Uterus (tissue), 4 donors: ENCODE measurements at regions of chr10 and their contacts with region 1.

Region 1: DNA sequence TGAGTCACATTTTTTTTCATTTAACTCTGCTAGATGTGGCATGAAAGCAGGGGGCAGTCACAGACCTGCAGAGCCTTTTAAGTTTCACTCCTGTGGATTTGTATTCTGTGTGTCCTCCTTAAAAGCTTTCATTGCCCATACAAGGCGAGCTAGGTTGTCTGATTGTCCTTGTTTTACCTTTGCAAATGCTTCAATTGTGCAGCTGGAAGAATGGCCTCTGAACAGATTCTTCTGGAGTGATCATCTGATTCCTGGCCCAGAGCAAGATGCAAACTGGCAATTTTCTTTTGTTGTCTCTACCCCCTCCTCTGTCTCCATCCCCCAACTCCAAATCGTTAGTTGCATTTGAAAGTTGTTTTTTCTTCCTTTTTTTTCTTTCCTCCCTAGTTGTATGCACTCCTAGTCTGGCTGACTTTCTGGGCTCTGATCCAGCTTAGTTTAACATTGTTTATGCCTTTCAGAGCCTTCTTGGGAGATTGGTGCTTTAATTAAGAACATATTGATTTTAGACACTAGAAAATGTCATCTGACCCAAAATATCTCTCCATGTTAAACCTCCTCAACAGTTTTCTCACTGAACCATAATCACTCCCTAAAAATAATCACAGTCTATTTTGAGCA is 150.2 kb downstream of the REEP3 start:
- DNase-seq: no peak
- H3K4me3 ChIP-seq: no peak overlapping the region
- H3K27ac ChIP-seq: peak overlapping the region; percentile 51 to 69
- H3K4me1 ChIP-seq: peaks cover 0 to 6% of the 10 kb centered on the region in 2 donors
- H3K27me3 ChIP-seq: no peaks in the 10 kb centered on the region
- CTCF ChIP-seq: peak in 1 of 4 experiments; percentile 10
- POLR2A ChIP-seq: no peak

Region 2: DNA sequence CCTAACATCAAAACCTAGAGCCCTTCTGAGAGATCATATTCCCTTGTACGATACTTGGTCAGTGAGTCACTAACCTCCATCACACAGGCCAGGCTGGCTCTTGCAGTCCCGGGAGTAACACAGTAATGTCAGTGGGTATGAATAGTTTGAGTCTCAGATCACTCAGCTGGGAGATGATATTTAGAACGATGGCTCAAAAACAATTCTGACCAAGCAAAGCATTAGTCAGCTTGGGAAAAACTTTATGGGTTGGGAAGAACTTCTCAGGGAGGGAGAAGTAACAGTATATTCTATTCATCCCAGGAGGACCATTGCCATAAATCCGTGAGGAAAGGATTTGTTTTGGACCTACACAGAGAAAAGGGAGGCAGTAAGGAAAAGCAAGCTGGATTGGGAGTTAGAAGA is 28.8 kb after region 1 on chr10:
- intact Hi-C with region 1: loop called (anchors 1 kb)
- DNase-seq: peak; percentile 46 to 72
- H3K4me3 ChIP-seq: no peak overlapping the region
- H3K27ac ChIP-seq: peak overlapping the region; percentile 85 to 89
- H3K4me1 ChIP-seq: peaks cover 6 to 13% of the 10 kb centered on the region in 2 donors
- H3K27me3 ChIP-seq: no peaks in the 10 kb centered on the region
- CTCF ChIP-seq: no peak
- POLR2A ChIP-seq: no peak